Prostate gland (tissue), 2 donors: ENCODE measurements at regions of chr1 and their contacts with region 1.

Region 1: GRCh38 chr1:20786253-20787028 is 666 bp downstream of the HP1BP3 start:
- DNase-seq: peak; percentile 93
- H3K4me3 ChIP-seq: peak overlapping the region; percentile 97
- H3K27ac ChIP-seq: peak overlapping the region; percentile 99
- H3K4me1 ChIP-seq: peaks cover 12% of the 10 kb centered on the region
- H3K27me3 ChIP-seq: no peaks in the 10 kb centered on the region
- CTCF ChIP-seq: peak in 3 of 4 experiments; percentile 3 to 19 (median 5)
- POLR2A ChIP-seq: peak; percentile 84

Region 2: DNA sequence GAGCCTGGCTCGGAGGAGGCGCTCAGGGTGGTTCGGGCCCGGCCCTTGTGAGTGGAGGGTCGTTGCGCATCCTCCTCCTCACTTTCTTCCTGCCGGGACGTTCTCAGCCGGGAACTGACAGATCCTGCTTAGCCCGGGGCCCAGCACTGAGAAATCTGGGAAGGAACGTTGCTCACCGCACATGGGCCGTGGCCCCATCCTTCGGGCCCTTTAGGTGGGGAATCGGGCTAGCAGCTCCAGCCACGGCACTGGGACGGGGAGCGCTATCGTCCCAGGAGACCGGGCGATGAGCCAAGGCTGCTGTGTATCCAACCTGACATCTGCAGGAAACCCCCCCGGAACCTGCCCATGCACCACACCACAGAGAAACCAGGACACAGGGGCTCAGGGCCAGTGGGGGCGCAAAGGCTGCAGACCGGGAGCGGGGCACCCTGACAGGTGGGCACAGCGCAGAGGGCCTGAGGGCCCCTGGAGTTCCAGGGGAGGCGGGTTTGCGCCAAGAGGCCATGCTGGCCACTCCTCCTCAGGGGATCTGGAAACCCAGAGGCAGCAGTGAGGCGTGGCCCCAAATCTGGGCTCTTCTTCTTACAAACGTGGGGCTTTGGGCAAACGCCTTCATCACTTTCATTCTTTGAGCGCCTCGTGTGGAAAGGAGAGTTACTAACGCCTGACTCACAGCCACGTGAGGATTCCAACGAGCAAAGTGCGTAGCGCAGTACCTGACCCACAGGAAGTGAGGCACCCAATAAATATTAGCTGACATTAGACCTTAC is 53.7 kb before region 1 on chr1 and contains the start of gene SH2D5:
- intact Hi-C with region 1: loop called (anchors 10 kb)
- DNase-seq: peak; percentile 84
- H3K4me3 ChIP-seq: peak within 1 kb of the TSS; percentile 45 to 64
- H3K27ac ChIP-seq: peak within 1 kb of the TSS; percentile 56 to 63
- H3K4me1 ChIP-seq: no peaks in the 10 kb centered on the region
- H3K27me3 ChIP-seq: no peaks in the 10 kb centered on the region
- CTCF ChIP-seq: peak in 3 of 4 experiments; percentile 13 to 44 (median 43)
- POLR2A ChIP-seq: no peak
- total RNA-seq, gene SH2D5: 2.2 TPM in 1 of 2 donors, not detected in the other

Region 3: DNA sequence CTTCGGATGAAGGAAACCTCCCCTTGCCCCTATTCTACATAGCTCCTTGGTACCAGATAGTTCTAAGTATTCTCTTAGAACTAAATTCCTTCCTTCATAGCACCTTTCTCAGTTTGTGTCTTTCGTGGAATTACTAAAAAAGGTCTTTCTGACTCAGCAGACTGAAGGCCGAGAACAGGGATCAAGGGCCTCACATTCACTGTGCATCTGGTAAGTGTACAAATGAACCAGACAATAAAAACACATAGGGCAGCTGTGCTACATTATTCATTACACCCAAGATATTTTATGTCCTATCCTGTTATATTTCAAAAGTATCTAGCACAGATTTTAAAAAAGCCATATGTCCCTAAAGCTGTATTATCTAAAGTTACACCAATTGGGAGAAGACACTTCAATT is 63.6 kb after region 1 on chr1:
- intact Hi-C with region 1: no loop called
- DNase-seq: no peak
- H3K4me3 ChIP-seq: no peak overlapping the region
- H3K27ac ChIP-seq: no peak overlapping the region
- H3K4me1 ChIP-seq: no peaks in the 10 kb centered on the region
- H3K27me3 ChIP-seq: no peaks in the 10 kb centered on the region
- CTCF ChIP-seq: no peak
- POLR2A ChIP-seq: no peak

Region 4: GRCh38 chr1:21176586-21177555 is 390.4 kb after region 1 on chr1 and contains the start of gene EIF4G3:
- intact Hi-C with region 1: loop called (anchors 5 kb)
- DNase-seq: peak; percentile 97
- H3K4me3 ChIP-seq: peak within 1 kb of the TSS; percentile 66 to 79
- H3K27ac ChIP-seq: peak within 1 kb of the TSS; percentile 79 to 82
- H3K4me1 ChIP-seq: no peaks in the 10 kb centered on the region
- H3K27me3 ChIP-seq: no peaks in the 10 kb centered on the region
- CTCF ChIP-seq: peak in 1 of 4 experiments; percentile 14
- POLR2A ChIP-seq: peak; percentile 67
- total RNA-seq, gene EIF4G3: 28.3 to 81.1 TPM